SK-N-SH (cell line): ENCODE measurements at regions of chr4 and their contacts with region 1.

Region 1: DNA sequence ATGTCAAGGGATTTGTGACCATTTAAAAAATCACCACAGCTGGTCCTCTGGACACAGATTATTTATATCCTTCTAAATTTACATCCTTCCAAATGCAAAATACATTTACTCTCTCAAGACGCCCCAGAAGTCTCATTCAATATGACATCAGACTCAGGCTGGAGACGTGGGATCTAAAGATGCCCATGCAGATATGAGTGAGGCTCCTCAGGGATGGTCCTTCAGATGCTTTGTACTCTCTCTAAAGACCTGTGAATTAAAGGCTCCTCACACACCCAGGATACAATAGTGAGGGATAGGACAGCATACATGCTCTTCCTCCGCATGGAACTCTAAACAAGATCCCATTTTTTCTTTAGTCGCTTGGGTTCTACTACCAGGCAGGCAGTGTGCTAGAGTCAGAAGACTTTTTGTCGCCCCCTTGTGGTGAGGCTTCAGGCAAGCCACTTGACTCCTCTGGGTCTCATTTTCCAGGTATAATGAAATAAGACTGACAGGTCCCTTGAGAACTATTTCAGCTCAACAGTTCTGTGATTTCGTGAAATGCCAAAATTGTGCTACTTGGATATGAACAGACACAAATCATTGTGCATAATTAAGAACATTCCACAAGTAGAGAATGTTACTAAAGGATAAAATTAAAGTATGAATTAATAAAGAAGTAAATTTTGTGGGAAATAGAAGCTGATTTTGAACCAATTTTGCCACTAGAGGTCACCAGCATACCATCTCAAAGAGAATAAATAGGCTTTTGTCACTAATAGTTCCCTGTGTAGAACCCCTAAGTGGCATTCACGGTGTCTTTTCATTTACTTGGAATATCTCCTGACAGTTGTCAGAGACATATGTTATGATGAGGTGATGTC is 13.7 kb upstream of the SCOC start:
- DNase-seq: peak; percentile 57
- H3K4me3 ChIP-seq: peak overlapping the region in 1 of 2 experiments; percentile 7; a peak in 1 of 4 replicates
- H3K27ac ChIP-seq: no peak overlapping the region
- H3K4me1 ChIP-seq: no peaks in the 10 kb centered on the region; a peak in 1 of 4 replicates
- H3K27me3 ChIP-seq: no peaks in the 10 kb centered on the region; the same call in 1 of the 2 replicates
- CTCF ChIP-seq: peak; percentile 93
- EP300 ChIP-seq: no peak
- RAD21 ChIP-seq: peak; percentile 75

Region 2: DNA sequence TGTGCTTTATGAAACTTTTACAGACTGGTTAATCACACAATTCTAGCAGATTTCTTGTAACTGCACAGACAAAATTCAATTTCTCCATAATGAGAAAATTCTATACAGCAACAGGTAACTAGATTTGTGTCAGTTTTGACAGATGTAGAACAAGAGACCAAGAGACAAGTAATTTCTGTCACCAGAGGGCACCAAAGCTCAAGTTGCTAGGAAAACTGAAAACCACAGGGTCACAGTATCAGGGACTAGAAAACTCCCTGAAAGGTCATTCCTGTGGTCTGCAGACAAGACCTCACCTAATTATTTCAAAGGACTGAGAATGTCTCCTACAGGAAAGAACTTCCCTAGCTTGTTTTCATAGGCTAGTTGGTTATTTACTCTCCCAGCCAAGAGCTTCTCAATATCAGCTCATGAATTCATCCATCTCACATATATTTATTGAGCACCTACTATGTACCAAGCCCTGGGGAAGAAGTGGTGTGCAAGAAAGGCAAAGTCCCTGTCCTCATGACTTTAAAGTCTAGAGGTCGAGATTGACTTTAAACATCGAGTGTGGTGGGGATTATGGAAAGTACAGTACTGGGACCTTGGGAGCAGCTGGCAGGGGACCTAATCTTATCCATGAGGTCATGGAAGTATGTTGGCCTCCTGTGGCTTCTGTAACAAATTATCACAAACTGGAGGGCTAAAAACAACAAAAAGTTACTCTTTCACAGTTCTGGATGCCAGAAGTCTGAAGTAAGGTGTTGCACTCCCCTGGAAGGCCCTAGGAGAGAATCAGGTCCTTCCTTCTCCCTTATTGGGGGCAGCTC is 756.0 kb before region 1 on chr4:
- CTCF ChIA-PET with region 1: interaction called, 23 read pairs
- POLR2A ChIA-PET with region 1: no interaction called
- DNase-seq: peak; percentile 55
- H3K4me3 ChIP-seq: no peak overlapping the region
- H3K27ac ChIP-seq: no peak overlapping the region
- H3K4me1 ChIP-seq: peaks cover 0 to 17% of the 10 kb centered on the region in 2 experiments; a peak in 1 of 4 replicates
- H3K27me3 ChIP-seq: no peaks in the 10 kb centered on the region
- CTCF ChIP-seq: peak; percentile 82
- EP300 ChIP-seq: no peak
- RAD21 ChIP-seq: peak; percentile 84

Region 3: DNA sequence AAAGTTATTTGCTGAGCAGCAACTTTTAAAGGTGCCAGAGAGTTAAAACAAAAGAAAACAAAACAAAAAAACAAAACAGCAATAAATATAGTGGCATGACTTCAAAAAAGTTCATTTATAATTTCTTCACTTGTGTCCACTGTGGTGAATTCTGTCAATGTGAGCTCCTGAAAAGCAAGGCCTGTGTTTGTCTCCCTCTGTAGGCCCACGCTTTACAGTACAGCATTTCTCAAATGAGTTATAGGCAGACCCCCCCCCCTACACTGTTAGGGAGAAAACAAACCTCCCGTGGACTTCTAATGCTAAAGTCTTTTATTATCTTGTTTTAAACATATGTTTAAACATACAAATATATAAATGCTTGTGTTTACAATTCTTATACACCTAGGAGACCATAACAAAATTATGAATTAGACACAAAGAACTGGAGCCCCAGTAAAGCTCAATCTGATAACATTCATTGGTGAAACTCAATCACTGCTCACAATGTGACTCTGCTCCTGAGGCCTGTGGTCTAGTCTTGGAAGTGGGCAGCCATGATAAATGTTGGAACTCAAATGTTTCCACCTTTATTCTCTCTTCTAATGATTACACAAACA is 33.3 kb before region 1 on chr4:
- CTCF ChIA-PET with region 1: interaction called, 14 read pairs
- POLR2A ChIA-PET with region 1: no interaction called
- DNase-seq: peak; percentile 54
- H3K4me3 ChIP-seq: peak overlapping the region in 1 of 2 experiments; percentile 26; a peak in 1 of 4 replicates
- H3K27ac ChIP-seq: no peak overlapping the region
- H3K4me1 ChIP-seq: no peaks in the 10 kb centered on the region; a peak in 1 of 4 replicates
- H3K27me3 ChIP-seq: no peaks in the 10 kb centered on the region
- CTCF ChIP-seq: peak; percentile 88
- EP300 ChIP-seq: no peak
- RAD21 ChIP-seq: peak; percentile 85

Region 4: DNA sequence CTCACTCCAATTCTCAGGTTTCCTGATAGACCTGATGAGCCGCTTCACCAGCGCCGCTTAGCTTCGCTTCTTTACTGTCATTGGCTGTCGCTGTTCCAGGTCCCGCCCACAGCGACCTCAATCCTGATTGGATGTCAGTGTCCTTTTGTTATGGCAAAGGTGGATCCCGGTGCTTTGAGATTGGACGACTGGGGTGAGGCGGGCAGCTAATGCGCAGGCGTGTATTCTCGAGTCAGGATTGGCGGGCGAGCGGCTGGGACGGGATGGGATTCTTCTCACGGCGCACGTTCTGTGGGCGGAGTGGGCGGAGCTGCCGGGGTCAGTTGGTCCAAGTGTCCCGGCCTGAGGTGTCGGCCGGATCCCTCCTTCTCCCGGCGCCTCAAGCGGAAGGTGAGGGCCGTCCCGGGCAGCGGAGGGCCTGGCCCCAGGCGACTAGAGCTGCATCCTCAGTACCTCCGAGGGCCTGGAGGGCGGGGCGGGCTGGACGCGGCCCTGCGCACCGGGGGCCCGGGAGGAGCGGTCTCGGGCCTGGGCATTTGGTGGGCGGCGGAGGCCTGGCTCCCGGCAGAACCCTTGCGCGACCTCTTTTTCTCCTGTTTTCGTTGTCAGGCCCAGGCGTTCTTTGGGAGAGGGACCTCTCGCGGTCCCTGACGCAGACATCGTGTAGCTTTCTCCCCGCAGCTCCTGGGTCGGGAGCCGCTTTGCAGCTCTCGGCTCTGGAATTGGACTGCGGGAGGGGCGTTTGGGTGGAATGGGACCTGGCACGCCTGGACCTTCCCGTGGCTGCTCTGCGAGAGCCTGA is 13.7 kb after region 1 on chr4 and contains the start of gene SCOC:
- CTCF ChIA-PET with region 1: interaction called, 63 read pairs
- POLR2A ChIA-PET with region 1: interaction called, 4 read pairs
- DNase-seq: peak; percentile 95
- H3K4me3 ChIP-seq: peak within 1 kb of the TSS; percentile 88 to 93
- H3K27ac ChIP-seq: peak within 1 kb of the TSS; percentile 85 to 95
- H3K4me1 ChIP-seq: peaks cover 22 to 23% of the 10 kb centered on the region in 2 experiments; a peak in 3 of 4 replicates
- H3K27me3 ChIP-seq: no peaks in the 10 kb centered on the region
- CTCF ChIP-seq: no peak
- EP300 ChIP-seq: no peak
- RAD21 ChIP-seq: no peak
- polyA plus RNA-seq, gene SCOC: 16.0 and 26.8 TPM in 2 replicates

Region 5: DNA sequence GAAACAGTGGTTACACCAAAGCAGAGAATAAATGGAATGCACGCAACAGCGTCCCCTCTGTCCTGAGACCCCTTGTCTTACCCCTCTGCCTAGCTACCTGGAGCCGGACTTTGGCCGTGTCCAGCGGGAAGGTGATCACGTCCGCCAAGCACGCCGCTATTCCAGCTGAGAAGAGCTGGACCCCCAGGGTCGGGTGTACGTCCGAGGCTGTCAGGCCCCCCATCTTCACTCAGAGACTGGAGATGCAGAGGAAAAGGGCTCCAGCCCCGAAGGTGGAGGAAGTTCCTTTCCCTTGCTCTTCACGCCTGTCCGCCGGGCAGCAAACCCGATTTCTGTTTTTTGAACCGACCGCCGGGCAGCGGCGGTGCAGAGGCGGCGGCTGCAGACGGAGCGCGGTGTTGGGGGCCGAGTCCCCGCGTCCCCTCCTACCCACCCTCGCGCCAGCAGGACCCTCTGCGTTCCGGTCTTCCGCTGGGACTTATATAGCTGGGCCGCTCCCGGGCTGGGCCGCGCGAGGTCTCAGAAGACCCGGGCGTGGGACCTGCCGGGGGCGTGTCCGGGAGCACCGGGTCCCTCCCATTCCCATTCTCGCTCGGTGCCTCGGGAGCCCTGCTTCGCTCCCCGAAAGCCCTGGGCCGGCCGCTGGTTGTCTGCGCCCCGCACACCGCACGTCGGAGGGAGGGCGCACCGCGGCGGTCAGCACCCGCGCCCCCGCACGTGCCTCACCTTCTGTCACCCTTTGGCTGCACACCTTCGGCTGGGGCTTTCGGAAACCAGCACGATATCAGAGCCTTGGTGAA is 208.9 kb after region 1 on chr4 and contains the start of gene UCP1:
- CTCF ChIA-PET with region 1: interaction called, 10 read pairs
- POLR2A ChIA-PET with region 1: no interaction called
- DNase-seq: peak; percentile 85
- H3K4me3 ChIP-seq: peak within 1 kb of the TSS; percentile 57 to 60
- H3K27ac ChIP-seq: no peak within 1 kb of the TSS
- H3K4me1 ChIP-seq: peaks cover 0 to 7% of the 10 kb centered on the region in 2 experiments; a peak in 1 of 4 replicates
- H3K27me3 ChIP-seq: peaks cover 38% of the 10 kb centered on the region
- CTCF ChIP-seq: no peak
- EP300 ChIP-seq: no peak
- RAD21 ChIP-seq: no peak
- polyA plus RNA-seq, gene UCP1: not detected in 2 replicates

Region 6: DNA sequence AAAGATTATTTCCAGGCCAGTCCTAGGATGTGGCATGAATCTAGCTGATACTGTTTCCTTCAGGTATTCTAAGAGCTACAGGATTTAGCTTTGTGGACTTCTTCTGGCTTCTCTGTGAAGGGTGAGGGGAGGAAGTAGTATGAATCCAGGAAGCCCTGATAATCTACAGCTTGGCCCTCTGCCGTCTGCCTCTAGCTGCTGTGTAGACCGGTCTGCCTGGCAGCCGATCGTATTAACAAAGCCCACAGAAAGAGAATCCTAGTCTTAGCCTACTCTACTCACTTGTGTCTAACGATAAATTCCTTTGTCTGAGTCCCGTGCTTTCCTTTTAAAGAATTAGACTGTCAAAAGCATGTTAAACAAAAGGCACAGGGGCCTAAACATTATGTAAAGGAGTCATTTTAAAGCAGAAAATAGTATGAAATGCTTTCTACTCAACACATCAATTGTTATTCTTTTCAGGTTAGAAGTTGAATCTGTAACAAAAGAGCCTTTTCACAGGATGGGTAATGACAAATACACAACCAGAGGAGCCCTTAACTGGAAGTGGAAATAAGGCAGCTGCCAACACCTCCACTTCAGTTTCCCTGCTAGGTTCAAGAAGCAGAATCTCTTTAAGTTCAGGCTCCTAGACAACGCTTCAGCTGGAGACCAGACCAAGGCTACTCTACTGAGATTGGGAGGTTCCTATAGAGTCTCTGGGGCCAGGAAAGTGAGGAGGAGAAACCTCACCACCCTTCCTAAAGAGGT is 257.9 kb after region 1 on chr4:
- CTCF ChIA-PET with region 1: interaction called, 22 read pairs
- POLR2A ChIA-PET with region 1: no interaction called
- DNase-seq: no peak
- H3K4me3 ChIP-seq: no peak overlapping the region
- H3K27ac ChIP-seq: no peak overlapping the region
- H3K4me1 ChIP-seq: no peaks in the 10 kb centered on the region; a peak in 1 of 4 replicates
- H3K27me3 ChIP-seq: no peaks in the 10 kb centered on the region
- CTCF ChIP-seq: no peak
- EP300 ChIP-seq: no peak
- RAD21 ChIP-seq: no peak

Region 7: GRCh38 chr4:140839888-140840790 is 480.3 kb after region 1 on chr4:
- CTCF ChIA-PET with region 1: interaction called, 10 read pairs
- POLR2A ChIA-PET with region 1: no interaction called
- DNase-seq: no peak
- H3K4me3 ChIP-seq: no peak overlapping the region
- H3K27ac ChIP-seq: peak overlapping the region in 1 of 2 experiments; percentile 3; a peak in 1 of 4 replicates
- H3K4me1 ChIP-seq: peaks cover 0 to 7% of the 10 kb centered on the region in 2 experiments; a peak in 2 of 4 replicates
- H3K27me3 ChIP-seq: no peaks in the 10 kb centered on the region; the same call in 1 of the 2 replicates
- CTCF ChIP-seq: no peak
- EP300 ChIP-seq: no peak
- RAD21 ChIP-seq: no peak